Ascending aorta (tissue), 2 donors: ENCODE measurements at regions of chr9 and their contacts with region 1.

Region 1: GRCh38 chr9:105275938-105276337 is 31.5 kb downstream of the SLC44A1 start:
- DNase-seq: no peak
- H3K4me3 ChIP-seq: no peak overlapping the region
- H3K27ac ChIP-seq: no peak overlapping the region
- H3K4me1 ChIP-seq: no peaks in the 10 kb centered on the region
- H3K27me3 ChIP-seq: no peaks in the 10 kb centered on the region
- CTCF ChIP-seq: no peak

Region 2: GRCh38 chr9:105264380-105264779 is 11.6 kb before region 1 on chr9:
- intact Hi-C with region 1: no loop called
- DNase-seq: no peak
- H3K4me3 ChIP-seq: no peak overlapping the region
- H3K27ac ChIP-seq: no peak overlapping the region
- H3K4me1 ChIP-seq: peaks cover 0 to 3% of the 10 kb centered on the region in 2 donors
- H3K27me3 ChIP-seq: no peaks in the 10 kb centered on the region
- CTCF ChIP-seq: no peak

Region 3: DNA sequence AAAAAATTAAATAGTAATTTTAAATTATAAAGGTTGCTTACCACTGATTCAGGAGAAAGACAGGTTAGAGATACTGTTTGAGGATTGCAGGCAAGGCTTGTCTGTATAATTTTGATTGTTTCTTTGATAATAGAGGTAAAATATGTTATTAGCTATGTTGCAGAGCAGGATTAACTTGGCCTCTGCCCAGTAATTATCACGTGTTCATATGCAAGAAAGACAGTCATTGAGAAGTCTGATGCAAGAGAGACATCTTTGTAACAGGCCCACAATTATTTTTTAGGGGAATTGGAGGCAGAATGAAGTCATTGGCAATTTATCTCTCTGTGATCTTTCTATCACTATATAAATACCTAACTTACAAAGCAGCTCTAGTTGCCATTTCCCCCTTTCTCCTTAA is 14.5 kb after region 1 on chr9:
- intact Hi-C with region 1: loop called (anchors 2 kb)
- DNase-seq: no peak
- H3K4me3 ChIP-seq: no peak overlapping the region
- H3K27ac ChIP-seq: no peak overlapping the region
- H3K4me1 ChIP-seq: no peaks in the 10 kb centered on the region
- H3K27me3 ChIP-seq: no peaks in the 10 kb centered on the region
- CTCF ChIP-seq: no peak

Region 4: GRCh38 chr9:105371691-105372090 is 95.8 kb after region 1 on chr9:
- intact Hi-C with region 1: no loop called
- DNase-seq: no peak
- H3K4me3 ChIP-seq: no peak overlapping the region
- H3K27ac ChIP-seq: no peak overlapping the region
- H3K4me1 ChIP-seq: no peaks in the 10 kb centered on the region
- H3K27me3 ChIP-seq: no peaks in the 10 kb centered on the region
- CTCF ChIP-seq: no peak

Region 5: DNA sequence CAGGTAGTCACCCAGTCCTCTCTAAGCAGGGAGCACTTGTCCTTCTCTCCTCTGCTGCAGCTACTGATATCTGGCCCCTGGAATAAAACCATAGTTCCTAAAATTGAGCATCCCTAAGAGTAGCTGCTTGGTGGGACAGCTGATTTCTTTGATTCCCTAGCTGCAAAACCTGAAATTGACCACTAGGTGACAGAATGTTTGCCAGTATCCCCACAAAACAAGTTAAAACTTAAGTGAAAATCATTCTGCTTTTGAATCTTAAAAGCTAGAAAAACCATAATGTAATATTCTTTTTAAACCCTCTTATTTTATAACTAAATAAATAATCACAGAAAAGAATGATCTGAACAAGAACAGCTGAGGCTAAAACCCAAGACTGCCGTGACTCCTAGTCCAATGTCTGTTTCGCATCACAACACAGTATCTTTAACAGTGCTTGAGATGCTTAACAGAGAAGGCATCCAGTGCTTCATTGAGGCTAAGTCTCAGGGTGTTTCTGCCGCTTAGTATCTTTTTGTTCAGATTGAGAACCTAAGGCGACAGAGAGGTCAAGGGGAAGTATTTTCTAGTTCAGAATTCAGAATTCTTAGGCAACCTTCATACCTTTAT is 362.0 kb after region 1 on chr9:
- intact Hi-C with region 1: no loop called
- DNase-seq: no peak
- H3K4me3 ChIP-seq: no peak overlapping the region
- H3K27ac ChIP-seq: no peak overlapping the region
- H3K4me1 ChIP-seq: no peaks in the 10 kb centered on the region
- H3K27me3 ChIP-seq: no peaks in the 10 kb centered on the region
- CTCF ChIP-seq: peak in 1 of 3 experiments; percentile 15